Activated CD8-positive, alpha-beta memory T cell treated with anti-CD3 and anti-CD28 coated beads, Interleukin-2, amount 10 ng/mL, durations not matched to agents 7 days and 5 days (primary cell): ENCODE measurements at regions of chr7 and their contacts with region 1.

Region 1: GRCh38 chr7:128343554-128344430 is at the start of gene RBM28:
- DNase-seq: peak; percentile 91
- ATAC-seq: peak; percentile 96
- H3K4me3 Mint-ChIP-seq: peak within 1 kb of the TSS; percentile 98
- H3K27ac Mint-ChIP-seq: peak within 1 kb of the TSS; percentile 92
- H3K4me1 Mint-ChIP-seq: peaks cover 27% of the 10 kb centered on the region
- H3K27me3 Mint-ChIP-seq: peaks cover 11% of the 10 kb centered on the region
- total RNA-seq, gene RBM28: 52.6 to 53.6 TPM

Region 2: DNA sequence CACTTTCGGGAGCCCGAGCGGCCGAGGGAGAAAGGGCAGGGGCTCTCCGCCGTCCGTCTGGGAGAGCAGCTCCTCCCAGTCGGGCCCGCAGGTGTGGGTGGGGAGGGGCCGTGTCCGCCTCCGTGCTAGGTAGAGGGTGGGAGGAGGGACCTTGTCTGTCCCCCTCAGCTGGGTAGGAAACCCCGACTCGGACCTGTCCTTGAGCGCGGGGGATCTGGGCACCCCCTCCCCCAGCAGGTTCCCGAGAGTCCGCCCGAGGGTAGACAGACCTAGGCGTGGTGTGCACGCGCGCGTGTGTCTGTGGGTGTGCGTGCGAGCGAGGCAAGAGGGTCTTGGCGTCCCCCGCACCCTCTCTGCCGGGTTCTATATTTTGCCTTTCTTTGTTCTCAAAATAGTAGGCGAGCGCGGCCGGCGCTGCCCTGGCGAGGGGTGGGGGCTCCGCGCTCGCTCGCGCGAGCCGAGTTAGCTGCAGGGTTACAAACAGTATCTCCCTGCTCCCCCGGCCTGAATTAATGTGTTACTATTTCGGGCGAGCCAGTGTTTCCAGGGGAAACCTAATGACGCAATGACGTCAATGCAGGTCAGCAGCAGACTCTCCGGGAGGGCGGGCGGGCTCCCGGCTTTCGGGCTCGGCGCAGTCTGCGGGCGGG is 176.6 kb before region 1 on chr7:
- CTCF ChIA-PET with region 1: no interaction called
- DNase-seq: no peak
- ATAC-seq: peak; percentile 32
- H3K4me3 Mint-ChIP-seq: peak overlapping the region; percentile 20
- H3K27ac Mint-ChIP-seq: no peak overlapping the region
- H3K4me1 Mint-ChIP-seq: peaks cover 9% of the 10 kb centered on the region
- H3K27me3 Mint-ChIP-seq: peaks cover 81% of the 10 kb centered on the region

Region 3: DNA sequence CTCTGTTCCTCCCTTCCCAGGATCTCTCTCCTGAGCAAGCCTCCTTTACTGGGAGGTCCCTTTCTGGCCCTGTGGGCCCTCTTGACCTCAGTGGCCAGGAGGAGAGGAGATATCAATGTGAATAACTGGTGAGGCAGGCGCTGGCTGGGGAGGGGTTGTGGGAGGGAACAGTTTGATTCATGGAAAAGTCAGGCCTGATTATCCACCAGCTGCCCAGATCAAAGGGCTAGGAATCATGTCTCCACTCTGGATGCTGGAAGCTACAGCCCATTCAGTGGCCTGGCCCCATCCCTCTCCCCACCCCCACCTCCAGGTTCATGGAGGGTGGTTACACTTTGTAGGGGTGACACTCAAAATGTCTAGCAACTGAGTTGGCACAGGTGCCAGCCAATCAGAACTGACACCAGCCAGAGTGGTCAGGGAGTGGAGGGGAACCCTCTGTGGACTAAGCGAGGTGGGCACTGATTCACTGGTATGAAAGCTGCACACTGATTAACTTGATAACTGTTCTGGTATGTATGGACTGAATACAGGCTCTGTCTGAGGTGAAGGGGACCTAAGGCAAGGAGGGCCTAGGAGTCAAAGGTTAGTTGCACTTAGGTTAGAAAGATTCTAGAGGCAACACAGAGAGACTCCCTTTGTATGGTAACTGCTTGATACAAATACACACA is 12.9 kb after region 1 on chr7:
- CTCF ChIA-PET with region 1: interaction called, 20 read pairs
- DNase-seq: no peak
- ATAC-seq: no peak
- H3K4me3 Mint-ChIP-seq: no peak overlapping the region
- H3K27ac Mint-ChIP-seq: no peak overlapping the region
- H3K4me1 Mint-ChIP-seq: peaks cover 13% of the 10 kb centered on the region
- H3K27me3 Mint-ChIP-seq: peaks cover 48% of the 10 kb centered on the region

Region 4: DNA sequence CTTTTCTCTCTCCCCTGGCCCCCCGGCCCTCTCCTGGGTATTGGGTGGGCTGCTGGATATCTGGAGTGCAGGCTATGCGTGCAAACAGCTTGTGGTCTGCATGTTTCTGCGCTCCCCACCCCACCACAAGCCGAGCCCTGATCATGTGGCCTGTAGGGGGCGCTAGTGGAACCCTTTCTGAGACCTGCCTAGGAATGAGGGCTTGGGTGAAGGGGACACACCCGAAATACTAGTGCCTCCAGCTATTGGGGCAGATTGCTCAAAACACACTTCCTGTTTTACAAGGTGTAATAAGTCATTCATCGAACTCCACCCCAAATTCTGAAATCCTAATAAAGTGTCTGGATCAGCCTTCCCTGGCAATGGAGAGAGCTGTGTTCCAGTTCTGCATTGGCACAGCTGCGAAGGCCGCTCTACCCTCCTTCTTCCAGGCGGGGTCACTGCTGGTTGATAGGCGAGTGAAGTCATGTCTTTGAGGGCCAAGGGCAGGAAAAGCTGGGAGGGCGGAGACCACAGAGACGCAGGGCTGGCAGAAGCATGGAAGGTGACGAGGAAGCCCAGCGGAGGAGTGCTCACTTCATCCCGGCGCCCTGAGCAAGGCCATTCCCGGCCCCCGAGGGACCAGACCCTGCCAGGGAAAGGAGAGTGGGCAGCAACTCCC is 37.5 kb after region 1 on chr7:
- CTCF ChIA-PET with region 1: interaction called, 191 read pairs
- DNase-seq: no peak
- ATAC-seq: no peak
- H3K4me3 Mint-ChIP-seq: no peak overlapping the region
- H3K27ac Mint-ChIP-seq: no peak overlapping the region
- H3K4me1 Mint-ChIP-seq: no peaks in the 10 kb centered on the region
- H3K27me3 Mint-ChIP-seq: peaks cover 4% of the 10 kb centered on the region

Region 5: DNA sequence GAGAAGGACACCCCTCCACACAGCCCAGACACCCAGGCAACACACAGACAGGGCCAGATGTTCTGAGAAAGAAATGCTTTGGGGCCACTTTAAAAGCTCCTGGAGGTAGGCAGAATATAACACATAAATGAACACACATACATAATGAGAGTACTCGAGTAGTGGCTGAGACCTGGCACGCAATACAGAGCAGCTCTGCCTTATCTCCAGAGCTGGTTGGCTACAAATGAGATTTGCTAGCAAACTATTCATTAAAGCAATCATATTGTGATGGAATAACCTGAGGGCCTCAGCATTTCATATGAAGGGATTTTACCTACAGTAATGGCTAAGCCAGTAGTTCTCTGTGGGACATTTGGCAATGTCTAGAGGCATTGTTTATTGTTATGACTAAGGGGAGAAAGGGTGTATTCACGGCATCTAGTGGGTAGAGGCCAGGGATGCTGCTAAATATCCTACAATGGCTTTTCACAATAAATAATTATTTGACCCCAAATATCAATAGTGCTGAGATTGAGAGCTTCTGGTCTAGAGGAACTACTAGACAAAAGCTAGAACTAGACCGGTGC is 71.5 kb after region 1 on chr7:
- CTCF ChIA-PET with region 1: interaction called, 15 read pairs
- DNase-seq: no peak
- ATAC-seq: no peak
- H3K4me3 Mint-ChIP-seq: no peak overlapping the region
- H3K27ac Mint-ChIP-seq: no peak overlapping the region
- H3K4me1 Mint-ChIP-seq: peaks cover 4% of the 10 kb centered on the region
- H3K27me3 Mint-ChIP-seq: peaks cover 24% of the 10 kb centered on the region

Region 6: DNA sequence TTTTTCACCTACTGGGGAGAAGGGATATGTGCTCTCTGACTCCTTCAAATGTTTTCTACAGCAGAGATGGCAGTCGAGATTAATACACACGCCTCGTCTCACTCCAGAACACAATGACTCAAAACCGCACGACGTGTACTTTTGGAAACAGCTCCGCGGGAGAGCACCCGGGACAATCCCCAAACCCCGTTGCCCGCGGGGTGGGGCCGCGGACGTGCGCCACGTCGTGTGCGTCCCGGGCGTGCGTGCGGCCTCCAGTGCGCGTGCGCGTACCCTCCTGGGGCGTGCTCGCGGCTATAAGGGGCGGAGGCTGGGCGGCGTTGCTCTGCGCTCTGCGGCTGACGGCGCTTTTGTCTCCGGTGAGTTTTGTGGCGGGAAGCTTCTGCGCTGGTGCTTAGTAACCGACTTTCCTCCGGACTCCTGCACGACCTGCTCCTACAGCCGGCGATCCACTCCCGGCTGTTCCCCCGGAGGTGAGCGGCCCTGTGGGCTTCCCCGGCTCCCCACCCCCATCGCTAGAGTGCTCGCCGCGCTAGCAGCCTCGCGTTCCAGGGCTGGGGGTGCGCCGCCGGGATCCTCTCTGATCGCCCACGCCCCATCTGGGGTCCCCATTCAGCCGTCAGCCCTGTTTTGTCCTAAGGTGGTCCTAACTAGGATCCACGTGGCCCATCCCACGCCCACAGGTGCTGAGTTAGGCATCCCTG is 111.9 kb after region 1 on chr7 and contains the start of gene HILPDA:
- CTCF ChIA-PET with region 1: interaction called, 16 read pairs
- DNase-seq: peak; percentile 95
- ATAC-seq: peak; percentile 91
- H3K4me3 Mint-ChIP-seq: peak within 1 kb of the TSS; percentile 94
- H3K27ac Mint-ChIP-seq: peak within 1 kb of the TSS; percentile 93
- H3K4me1 Mint-ChIP-seq: peaks cover 55% of the 10 kb centered on the region
- H3K27me3 Mint-ChIP-seq: peaks cover 26% of the 10 kb centered on the region
- total RNA-seq, gene HILPDA: 13.2 to 24.0 TPM